Naive thymus-derived CD4-positive, alpha-beta T cell (primary cell): ENCODE measurements at regions of chr13 and their contacts with region 1.

Region 1: GRCh38 chr13:98947925-98948324 is 29.9 kb downstream of the DOCK9 start:
- DNase-seq: no peak
- ATAC-seq: no peak
- H3K4me3 ChIP-seq: no peak overlapping the region
- H3K4me3 Mint-ChIP-seq: peak overlapping the region in 2 of 10 donors; percentile 6 to 9
- H3K27ac ChIP-seq: no peak overlapping the region
- H3K27ac Mint-ChIP-seq: peak overlapping the region in 5 of 9 donors; percentile 33 to 84 (median 38)
- H3K4me1 ChIP-seq: peaks cover 0 to 13% of the 10 kb centered on the region in 2 donors
- H3K4me1 Mint-ChIP-seq: peaks cover 22 to 85% (median 66%) of the 10 kb centered on the region in 7 donors
- H3K27me3 ChIP-seq: no peaks in the 10 kb centered on the region
- H3K27me3 Mint-ChIP-seq: no peaks in the 10 kb centered on the region

Region 2: DNA sequence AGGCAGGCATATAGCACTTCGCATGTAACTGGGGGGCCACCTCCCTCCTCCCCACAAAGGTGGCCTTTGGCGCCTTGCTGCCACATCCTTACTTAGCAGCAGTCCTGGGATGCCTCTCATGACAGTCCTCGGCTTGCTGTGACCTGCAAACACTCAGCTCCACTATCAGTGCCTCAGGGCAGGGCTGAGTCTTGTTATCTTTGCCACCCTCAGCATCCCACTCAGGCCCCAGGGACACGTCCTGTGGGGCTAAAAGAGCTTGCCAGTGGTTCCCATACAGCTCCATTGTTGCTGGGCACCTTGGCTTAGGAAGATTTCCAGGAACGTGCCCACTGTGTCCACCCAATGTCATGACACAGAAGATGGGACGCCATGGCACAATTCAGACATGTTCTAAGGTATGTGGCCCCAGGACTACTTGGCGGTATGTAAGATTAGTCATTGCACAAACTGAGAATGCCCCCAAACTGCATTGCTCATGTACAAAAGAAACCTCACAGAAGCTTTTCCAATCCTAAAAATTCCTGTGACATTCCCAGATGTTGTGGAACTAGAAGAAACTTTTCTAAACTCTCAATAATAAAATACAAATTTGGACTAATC is 13.7 kb after region 1 on chr13:
- CTCF ChIA-PET with region 1: no interaction called
- POLR2A ChIA-PET with region 1: no interaction called
- intact Hi-C with region 1: loop called in 1 of 2 experiments (anchors 2 kb)
- DNase-seq: no peak
- ATAC-seq: no peak
- H3K4me3 ChIP-seq: no peak overlapping the region
- H3K4me3 Mint-ChIP-seq: no peak overlapping the region
- H3K27ac ChIP-seq: no peak overlapping the region
- H3K27ac Mint-ChIP-seq: no peak overlapping the region
- H3K4me1 ChIP-seq: no peaks in the 10 kb centered on the region
- H3K4me1 Mint-ChIP-seq: peaks cover 0 to 38% (median 24%) of the 10 kb centered on the region in 7 donors
- H3K27me3 ChIP-seq: no peaks in the 10 kb centered on the region
- H3K27me3 Mint-ChIP-seq: no peaks in the 10 kb centered on the region

Region 3: GRCh38 chr13:100608906-100609305 is 1661.0 kb after region 1 on chr13:
- CTCF ChIA-PET with region 1: no interaction called
- POLR2A ChIA-PET with region 1: no interaction called
- intact Hi-C with region 1: no loop called
- DNase-seq: no peak
- ATAC-seq: peak; percentile 82
- H3K4me3 ChIP-seq: no peak overlapping the region
- H3K4me3 Mint-ChIP-seq: peak overlapping the region in 1 of 10 donors; percentile 58
- H3K27ac ChIP-seq: no peak overlapping the region
- H3K27ac Mint-ChIP-seq: peak overlapping the region in 3 of 9 donors; percentile 45 to 89 (median 54)
- H3K4me1 ChIP-seq: no peaks in the 10 kb centered on the region
- H3K4me1 Mint-ChIP-seq: peaks cover 0 to 36% (median 5%) of the 10 kb centered on the region in 7 donors
- H3K27me3 ChIP-seq: no peaks in the 10 kb centered on the region
- H3K27me3 Mint-ChIP-seq: no peaks in the 10 kb centered on the region